K562 (cell line): ENCODE measurements at regions of chr6 and their contacts with region 1.

Region 1: DNA sequence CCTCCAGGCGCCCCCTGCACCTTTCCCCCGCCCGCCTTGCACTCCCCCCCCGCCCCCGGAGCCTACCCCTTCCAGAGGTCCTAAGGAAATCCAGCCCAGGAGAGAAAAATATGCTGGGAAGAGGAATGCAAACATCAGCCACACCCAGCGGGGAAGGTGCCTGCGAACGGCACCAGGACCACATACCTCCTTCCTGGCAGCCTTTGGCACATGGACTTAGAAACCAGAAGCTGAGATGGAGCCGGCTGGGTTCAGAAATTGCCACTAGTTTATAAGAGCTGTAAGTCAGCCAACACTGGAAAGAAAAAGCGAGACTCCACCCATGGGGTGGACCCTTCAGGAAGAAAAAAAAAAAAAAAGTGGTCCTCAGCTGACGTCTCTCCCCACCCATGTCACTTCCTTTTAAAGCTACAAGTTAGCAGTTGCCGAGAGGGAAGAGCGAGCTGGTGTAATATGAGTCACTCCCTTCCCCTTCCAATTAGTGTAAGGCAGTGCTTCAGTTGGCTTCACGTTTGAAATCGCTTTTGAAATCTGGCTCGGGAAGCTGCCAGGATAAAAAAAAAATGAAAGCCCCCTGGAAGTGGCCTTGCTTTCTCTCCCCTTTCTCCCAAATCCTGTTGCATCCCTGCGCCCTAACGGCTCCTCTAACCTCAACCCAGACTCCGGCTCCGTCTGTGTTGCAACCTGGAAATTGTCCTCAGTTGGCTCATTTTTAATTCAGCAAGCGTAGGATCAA is at the start of gene AGPAT4:
- DNase-seq: peak; percentile 87 to 97 (median 92)
- ATAC-seq: peak; percentile 95
- H3K4me3 ChIP-seq: peak within 1 kb of the TSS; percentile 58
- H3K27ac ChIP-seq: peak within 1 kb of the TSS; percentile 75
- H3K4me1 ChIP-seq: peaks cover 4 to 31% of the 10 kb centered on the region in 2 experiments
- H3K27me3 ChIP-seq: no peaks in the 10 kb centered on the region
- CTCF ChIP-seq: no peak
- EP300 ChIP-seq: peak; percentile 52
- POLR2A ChIP-seq: peak; percentile 77
- RAD21 ChIP-seq: no peak
- polyA plus RNA-seq, gene AGPAT4: 2.2 to 3.4 TPM

Region 2: GRCh38 chr6:160791459-160791858 is 482.5 kb before region 1 on chr6:
- CTCF ChIA-PET with region 1: no interaction called
- POLR2A ChIA-PET with region 1: no interaction called
- in situ Hi-C with region 1: no loop called
- intact Hi-C with region 1: loop called (anchors 10 kb)
- DNase-seq: peak in 1 of 4 experiments; percentile 72
- ATAC-seq: peak; percentile 80
- H3K4me3 ChIP-seq: no peak overlapping the region
- H3K27ac ChIP-seq: peak overlapping the region; percentile 92
- H3K4me1 ChIP-seq: peaks cover 10 to 19% of the 10 kb centered on the region in 2 experiments; a peak in 4 of 5 replicates
- H3K27me3 ChIP-seq: no peaks in the 10 kb centered on the region
- CTCF ChIP-seq: no peak
- EP300 ChIP-seq: no peak
- POLR2A ChIP-seq: no peak
- RAD21 ChIP-seq: no peak

Region 3: DNA sequence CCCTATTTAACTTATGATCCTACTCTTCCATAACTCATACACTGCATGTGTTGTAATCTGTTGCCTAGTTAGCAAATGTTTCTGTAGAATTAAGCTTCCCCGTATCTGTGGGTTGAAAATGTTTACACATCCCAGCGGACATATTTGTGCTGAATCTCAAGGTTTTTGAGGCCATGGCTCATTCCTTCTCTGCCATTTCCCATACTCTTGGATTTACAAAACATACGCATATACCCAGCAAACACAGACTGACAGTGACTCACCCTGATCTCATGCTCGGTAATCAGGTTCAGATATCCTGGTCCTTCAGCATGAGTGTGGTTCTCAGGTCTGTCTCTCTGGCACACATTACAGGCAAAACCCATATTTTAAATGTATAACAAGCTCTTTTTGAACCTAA is 58.7 kb before region 1 on chr6:
- CTCF ChIA-PET with region 1: no interaction called
- POLR2A ChIA-PET with region 1: interaction called, 3 read pairs
- in situ Hi-C with region 1: no loop called
- intact Hi-C with region 1: loop called (anchors 2 kb)
- DNase-seq: peak in 2 of 4 experiments; percentile 65 to 66
- ATAC-seq: peak; percentile 78
- H3K4me3 ChIP-seq: no peak overlapping the region
- H3K27ac ChIP-seq: peak overlapping the region; percentile 56
- H3K4me1 ChIP-seq: peaks cover 0 to 10% of the 10 kb centered on the region in 2 experiments; a peak in 3 of 5 replicates
- H3K27me3 ChIP-seq: no peaks in the 10 kb centered on the region; a peak in 1 of 5 replicates
- CTCF ChIP-seq: no peak
- EP300 ChIP-seq: no peak
- POLR2A ChIP-seq: no peak
- RAD21 ChIP-seq: no peak

Region 4: GRCh38 chr6:161257793-161258457 is 16.0 kb before region 1 on chr6:
- CTCF ChIA-PET with region 1: interaction called, 4 read pairs
- POLR2A ChIA-PET with region 1: interaction called, 23 read pairs
- in situ Hi-C with region 1: no loop called
- intact Hi-C with region 1: loop called (anchors 1 kb)
- DNase-seq: no peak
- ATAC-seq: no peak
- H3K4me3 ChIP-seq: no peak overlapping the region
- H3K27ac ChIP-seq: peak overlapping the region; percentile 23; the same call in 1 of the 3 replicates
- H3K4me1 ChIP-seq: peaks cover 35 to 71% of the 10 kb centered on the region in 2 experiments; a peak in 4 of 5 replicates
- H3K27me3 ChIP-seq: no peaks in the 10 kb centered on the region; a peak in 1 of 5 replicates
- CTCF ChIP-seq: no peak; a peak in 1 of 6 replicates
- EP300 ChIP-seq: no peak
- POLR2A ChIP-seq: no peak
- RAD21 ChIP-seq: no peak

Region 5: DNA sequence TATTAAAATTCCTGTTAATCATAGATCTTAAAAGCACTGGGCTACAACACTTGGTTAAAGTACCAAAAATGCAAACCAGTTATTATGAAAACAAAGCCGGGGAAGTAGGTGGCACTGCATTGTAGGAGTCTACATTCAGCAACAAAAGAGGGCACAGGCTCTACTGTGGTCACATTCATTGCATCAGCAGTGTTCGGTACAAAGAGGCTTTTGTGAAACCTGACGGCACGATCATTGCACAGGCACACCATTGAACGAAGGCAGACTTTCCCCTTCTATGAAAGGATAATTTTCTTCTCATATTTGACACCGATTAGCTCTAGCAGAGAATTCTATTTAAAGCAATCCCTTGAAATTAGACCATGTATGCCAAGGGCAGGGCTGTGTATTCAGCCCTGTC is 44.5 kb after region 1 on chr6:
- CTCF ChIA-PET with region 1: no interaction called
- POLR2A ChIA-PET with region 1: interaction called, 5 read pairs
- in situ Hi-C with region 1: no loop called
- intact Hi-C with region 1: loop called (anchors 2 kb)
- DNase-seq: no peak
- ATAC-seq: no peak
- H3K4me3 ChIP-seq: no peak overlapping the region
- H3K27ac ChIP-seq: no peak overlapping the region
- H3K4me1 ChIP-seq: peaks cover 0 to 4% of the 10 kb centered on the region in 2 experiments; a peak in 1 of 5 replicates
- H3K27me3 ChIP-seq: no peaks in the 10 kb centered on the region
- CTCF ChIP-seq: no peak
- EP300 ChIP-seq: no peak
- POLR2A ChIP-seq: no peak
- RAD21 ChIP-seq: no peak

Region 6: DNA sequence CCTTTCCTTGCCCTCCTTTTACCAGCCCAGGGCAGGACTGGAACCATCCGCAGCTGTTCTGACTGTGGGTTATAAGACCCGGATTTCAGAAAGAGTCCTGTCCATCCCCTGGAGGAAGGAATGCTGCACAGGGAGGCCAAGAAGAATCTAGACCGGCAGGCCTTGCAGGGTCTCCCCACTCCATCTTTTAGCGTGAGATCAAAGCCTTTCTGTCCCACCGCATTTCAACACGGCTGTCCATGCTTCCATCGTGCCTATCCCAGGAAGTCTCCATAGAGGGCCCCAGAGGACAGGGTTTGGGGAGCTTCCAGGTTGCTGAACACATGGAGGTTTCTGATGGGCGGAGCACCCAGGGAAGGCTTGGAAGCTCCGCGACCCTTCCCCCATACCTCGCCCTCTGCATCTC is 79.3 kb after region 1 on chr6:
- CTCF ChIA-PET with region 1: no interaction called
- POLR2A ChIA-PET with region 1: no interaction called
- in situ Hi-C with region 1: no loop called
- intact Hi-C with region 1: loop called (anchors 5 kb)
- DNase-seq: peak; percentile 54 to 80 (median 66)
- ATAC-seq: peak; percentile 90
- H3K4me3 ChIP-seq: no peak overlapping the region
- H3K27ac ChIP-seq: no peak overlapping the region
- H3K4me1 ChIP-seq: peaks cover 2 to 14% of the 10 kb centered on the region in 2 experiments; a peak in 3 of 5 replicates
- H3K27me3 ChIP-seq: no peaks in the 10 kb centered on the region
- CTCF ChIP-seq: peak; percentile 76 to 85 (median 79)
- EP300 ChIP-seq: no peak
- POLR2A ChIP-seq: no peak
- RAD21 ChIP-seq: peak; percentile 27 to 82; a peak in 2 of 4 replicates

Region 7: GRCh38 chr6:161407581-161407980 is 133.7 kb after region 1 on chr6:
- CTCF ChIA-PET with region 1: no interaction called
- POLR2A ChIA-PET with region 1: no interaction called
- in situ Hi-C with region 1: no loop called
- intact Hi-C with region 1: no loop called
- DNase-seq: peak; percentile 25 to 88 (median 36)
- ATAC-seq: no peak; the same call in 2 of the 3 replicates
- H3K4me3 ChIP-seq: no peak overlapping the region
- H3K27ac ChIP-seq: peak overlapping the region; percentile 24; the same call in 2 of the 3 replicates
- H3K4me1 ChIP-seq: peaks cover 0 to 15% of the 10 kb centered on the region in 2 experiments; a peak in 2 of 5 replicates
- H3K27me3 ChIP-seq: no peaks in the 10 kb centered on the region; a peak in 1 of 5 replicates
- CTCF ChIP-seq: no peak
- EP300 ChIP-seq: peak; percentile 43; the same call in 1 of the 2 replicates
- POLR2A ChIP-seq: no peak
- RAD21 ChIP-seq: no peak